HCT116 (cell line): ENCODE measurements at regions of chr2 and their contacts with region 1.

Region 1: GRCh38 chr2:136378712-136379595 is 261.0 kb upstream of the CXCR4 start:
- DNase-seq: peak; percentile 39
- ATAC-seq: peak; percentile 92
- H3K4me3 ChIP-seq: no peak overlapping the region
- H3K27ac ChIP-seq: no peak overlapping the region
- H3K4me1 ChIP-seq: no peaks in the 10 kb centered on the region
- H3K27me3 ChIP-seq: no peaks in the 10 kb centered on the region
- CTCF ChIP-seq: peak; percentile 82 to 83 (median 83)
- POLR2A ChIP-seq: no peak
- RAD21 ChIP-seq: peak; percentile 96

Region 2: GRCh38 chr2:135337071-135337470 is 1041.9 kb before region 1 on chr2:
- CTCF ChIA-PET with region 1: no interaction called
- POLR2A ChIA-PET with region 1: no interaction called
- RAD21 ChIA-PET with region 1: no interaction called
- intact Hi-C with region 1: no loop called
- DNase-seq: no peak
- ATAC-seq: no peak
- H3K4me3 ChIP-seq: no peak overlapping the region
- H3K27ac ChIP-seq: no peak overlapping the region
- H3K4me1 ChIP-seq: no peaks in the 10 kb centered on the region
- H3K27me3 ChIP-seq: no peaks in the 10 kb centered on the region
- CTCF ChIP-seq: no peak
- POLR2A ChIP-seq: no peak
- RAD21 ChIP-seq: no peak

Region 3: GRCh38 chr2:136129601-136130000 is 249.4 kb before region 1 on chr2:
- CTCF ChIA-PET with region 1: no interaction called
- POLR2A ChIA-PET with region 1: no interaction called
- RAD21 ChIA-PET with region 1: no interaction called
- intact Hi-C with region 1: loop called (anchors 10 kb)
- DNase-seq: no peak
- ATAC-seq: no peak
- H3K4me3 ChIP-seq: no peak overlapping the region
- H3K27ac ChIP-seq: no peak overlapping the region
- H3K4me1 ChIP-seq: peaks cover 0 to 20% of the 10 kb centered on the region in 2 experiments; a peak in 1 of 4 replicates
- H3K27me3 ChIP-seq: peaks cover 26% of the 10 kb centered on the region
- CTCF ChIP-seq: no peak
- POLR2A ChIP-seq: no peak
- RAD21 ChIP-seq: no peak